Activated CD4-positive, alpha-beta memory T cell treated with anti-CD3 and anti-CD28 coated beads for 36 hours (primary cell): ENCODE measurements at regions of chr2 and their contacts with region 1.

Region 1: GRCh38 chr2:180006781-180007579 is at the start of gene CWC22:
- DNase-seq: peak; percentile 90
- H3K4me3 Mint-ChIP-seq: peak within 1 kb of the TSS; percentile 88
- H3K27ac Mint-ChIP-seq: peak within 1 kb of the TSS; percentile 99
- H3K4me1 Mint-ChIP-seq: peaks cover 38% of the 10 kb centered on the region
- H3K27me3 Mint-ChIP-seq: no peaks in the 10 kb centered on the region
- total RNA-seq, gene CWC22: 21.1 to 23.6 TPM

Region 2: GRCh38 chr2:179963626-179964025 is 43.4 kb before region 1 on chr2:
- CTCF ChIA-PET with region 1: no interaction called
- POLR2A ChIA-PET with region 1: no interaction called
- intact Hi-C with region 1: loop called (anchors 5 kb)
- DNase-seq: no peak
- H3K4me3 Mint-ChIP-seq: no peak overlapping the region
- H3K27ac Mint-ChIP-seq: peak overlapping the region; percentile 38
- H3K4me1 Mint-ChIP-seq: peaks cover 6% of the 10 kb centered on the region
- H3K27me3 Mint-ChIP-seq: no peaks in the 10 kb centered on the region

Region 3: GRCh38 chr2:179991344-179991743 is 15.6 kb before region 1 on chr2:
- CTCF ChIA-PET with region 1: no interaction called
- POLR2A ChIA-PET with region 1: no interaction called
- intact Hi-C with region 1: no loop called
- DNase-seq: peak; percentile 18
- H3K4me3 Mint-ChIP-seq: no peak overlapping the region
- H3K27ac Mint-ChIP-seq: peak overlapping the region; percentile 65
- H3K4me1 Mint-ChIP-seq: peaks cover 33% of the 10 kb centered on the region
- H3K27me3 Mint-ChIP-seq: no peaks in the 10 kb centered on the region

Region 4: GRCh38 chr2:180021850-180022249 is 14.9 kb after region 1 on chr2:
- CTCF ChIA-PET with region 1: no interaction called
- POLR2A ChIA-PET with region 1: no interaction called
- intact Hi-C with region 1: no loop called
- DNase-seq: no peak
- H3K4me3 Mint-ChIP-seq: no peak overlapping the region
- H3K27ac Mint-ChIP-seq: no peak overlapping the region
- H3K4me1 Mint-ChIP-seq: no peaks in the 10 kb centered on the region
- H3K27me3 Mint-ChIP-seq: peaks cover 7% of the 10 kb centered on the region